ENCODE measurements at regions of chr3 and their contacts with region 1.

Region 1: GRCh38 chr3:149958171-149958796 is 12.4 kb downstream of the PFN2 start:
- DNase-seq: no peak
- ATAC-seq: no peak
- H3K4me3 ChIP-seq: no peak overlapping the region
- H3K27ac ChIP-seq: no peak overlapping the region
- H3K4me1 ChIP-seq: no peaks in the 10 kb centered on the region
- H3K27me3 ChIP-seq: no peaks in the 10 kb centered on the region
- CTCF ChIP-seq: no peak
- EP300 ChIP-seq: no peak
- POLR2A ChIP-seq: no peak
- RAD21 ChIP-seq: no peak

Region 2: GRCh38 chr3:150015901-150016300 is 57.6 kb after region 1 on chr3:
- CTCF ChIA-PET with region 1: no interaction called
- POLR2A ChIA-PET with region 1: no interaction called
- in situ Hi-C with region 1: no loop called
- intact Hi-C with region 1: no loop called
- DNase-seq: no peak
- ATAC-seq: no peak
- H3K4me3 ChIP-seq: no peak overlapping the region
- H3K27ac ChIP-seq: no peak overlapping the region
- H3K4me1 ChIP-seq: no peaks in the 10 kb centered on the region
- H3K27me3 ChIP-seq: peaks cover 0 to 14% of the 10 kb centered on the region in 2 experiments; a peak in 2 of 5 replicates
- CTCF ChIP-seq: no peak
- EP300 ChIP-seq: no peak
- POLR2A ChIP-seq: no peak
- RAD21 ChIP-seq: no peak

Region 3: GRCh38 chr3:150194513-150194912 is 236.2 kb after region 1 on chr3:
- CTCF ChIA-PET with region 1: no interaction called
- POLR2A ChIA-PET with region 1: no interaction called
- in situ Hi-C with region 1: loop called (anchors 10 kb)
- intact Hi-C with region 1: no loop called
- DNase-seq: no peak
- ATAC-seq: no peak
- H3K4me3 ChIP-seq: no peak overlapping the region
- H3K27ac ChIP-seq: no peak overlapping the region
- H3K4me1 ChIP-seq: no peaks in the 10 kb centered on the region
- H3K27me3 ChIP-seq: no peaks in the 10 kb centered on the region
- CTCF ChIP-seq: no peak
- EP300 ChIP-seq: no peak
- POLR2A ChIP-seq: no peak
- RAD21 ChIP-seq: no peak

Measured in K562 (cell line).